Prostate gland (tissue), 2 donors: ENCODE measurements at regions of chr10 and their contacts with region 1.

Region 1: GRCh38 chr10:124530215-124530665 is 68.6 kb downstream of the LHPP start:
- DNase-seq: peak; percentile 72
- H3K4me3 ChIP-seq: no peak overlapping the region
- H3K27ac ChIP-seq: no peak overlapping the region
- H3K4me1 ChIP-seq: no peaks in the 10 kb centered on the region
- H3K27me3 ChIP-seq: no peaks in the 10 kb centered on the region
- CTCF ChIP-seq: peak; percentile 72 to 92 (median 76)
- POLR2A ChIP-seq: no peak

Region 2: GRCh38 chr10:124568848-124569622 is 38.8 kb after region 1 on chr10:
- intact Hi-C with region 1: no loop called
- DNase-seq: no peak
- H3K4me3 ChIP-seq: no peak overlapping the region
- H3K27ac ChIP-seq: no peak overlapping the region
- H3K4me1 ChIP-seq: no peaks in the 10 kb centered on the region
- H3K27me3 ChIP-seq: no peaks in the 10 kb centered on the region
- CTCF ChIP-seq: no peak
- POLR2A ChIP-seq: no peak

Region 3: GRCh38 chr10:124827474-124827873 is 297.2 kb after region 1 on chr10:
- intact Hi-C with region 1: loop called (anchors 2 kb)
- DNase-seq: no peak
- H3K4me3 ChIP-seq: no peak overlapping the region
- H3K27ac ChIP-seq: no peak overlapping the region
- H3K4me1 ChIP-seq: no peaks in the 10 kb centered on the region
- H3K27me3 ChIP-seq: no peaks in the 10 kb centered on the region
- CTCF ChIP-seq: peak in 3 of 4 experiments; percentile 51 to 67 (median 65)
- POLR2A ChIP-seq: no peak